ENCODE measurements at regions of chr3 and their contacts with region 1.

Region 1: GRCh38 chr3:179147873-179148615 is at the start of gene PIK3CA:
- DNase-seq: peak; percentile 85 to 99 (median 90)
- ATAC-seq: peak; percentile 74
- H3K4me3 ChIP-seq: peak within 1 kb of the TSS; percentile 73
- H3K4me3 Mint-ChIP-seq: peak within 1 kb of the TSS; percentile 95
- H3K27ac ChIP-seq: peak within 1 kb of the TSS; percentile 90 to 100
- H3K27ac Mint-ChIP-seq: peak within 1 kb of the TSS; percentile 91
- H3K4me1 ChIP-seq: peaks cover 2% of the 10 kb centered on the region
- H3K4me1 Mint-ChIP-seq: peaks cover 40% of the 10 kb centered on the region
- H3K27me3 ChIP-seq: no peaks in the 10 kb centered on the region
- H3K27me3 Mint-ChIP-seq: no peaks in the 10 kb centered on the region
- CTCF ChIP-seq: no peak
- total RNA-seq, gene PIK3CA: 57.1 to 63.1 TPM

Region 2: DNA sequence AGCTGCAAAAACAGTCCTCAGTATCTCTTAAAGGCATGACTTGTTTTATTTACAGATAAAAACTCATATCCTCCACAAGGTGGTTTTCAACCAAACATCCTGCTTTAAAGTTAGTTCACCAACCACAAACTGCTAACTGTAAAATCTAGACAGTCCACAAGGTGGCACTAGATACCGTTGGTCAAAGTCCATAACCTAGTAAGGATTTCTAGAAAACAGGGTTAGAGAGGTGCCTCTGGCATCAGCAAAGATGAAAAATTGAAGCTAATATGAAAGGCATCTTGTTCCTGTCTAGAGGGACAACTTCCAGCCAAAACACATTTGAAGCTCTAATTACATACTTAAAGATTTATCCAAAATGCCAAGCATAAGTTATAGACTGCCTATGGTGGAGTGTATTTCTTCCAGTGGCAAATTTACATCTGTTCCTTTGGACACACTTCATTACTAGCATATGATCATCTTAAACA is 132.5 kb before region 1 on chr3:
- CTCF ChIA-PET with region 1: interaction called, 6 read pairs
- POLR2A ChIA-PET with region 1: interaction called, 22 read pairs
- intact Hi-C with region 1: loop called (anchors 1 to 2 kb)
- DNase-seq: peak in 12 of 14 experiments; percentile 6 to 90 (median 58)
- ATAC-seq: peak; percentile 98
- H3K4me3 ChIP-seq: no peak overlapping the region
- H3K4me3 Mint-ChIP-seq: no peak overlapping the region
- H3K27ac ChIP-seq: no peak overlapping the region
- H3K27ac Mint-ChIP-seq: peak overlapping the region; percentile 31
- H3K4me1 ChIP-seq: peaks cover 4% of the 10 kb centered on the region
- H3K4me1 Mint-ChIP-seq: peaks cover 45% of the 10 kb centered on the region
- H3K27me3 ChIP-seq: no peaks in the 10 kb centered on the region
- H3K27me3 Mint-ChIP-seq: no peaks in the 10 kb centered on the region
- CTCF ChIP-seq: peak; percentile 88

Region 3: GRCh38 chr3:179071550-179072397 is 76.3 kb before region 1 on chr3 and contains the start of gene ZMAT3:
- CTCF ChIA-PET with region 1: no interaction called
- POLR2A ChIA-PET with region 1: interaction called, 27 read pairs
- intact Hi-C with region 1: loop called (anchors 2 kb)
- DNase-seq: peak; percentile 72 to 94 (median 81)
- ATAC-seq: peak; percentile 81
- H3K4me3 ChIP-seq: peak within 1 kb of the TSS; percentile 78
- H3K4me3 Mint-ChIP-seq: peak within 1 kb of the TSS; percentile 99
- H3K27ac ChIP-seq: peak within 1 kb of the TSS; percentile 76 to 92
- H3K27ac Mint-ChIP-seq: peak within 1 kb of the TSS; percentile 86
- H3K4me1 ChIP-seq: peaks cover 30% of the 10 kb centered on the region
- H3K4me1 Mint-ChIP-seq: peaks cover 69% of the 10 kb centered on the region
- H3K27me3 ChIP-seq: no peaks in the 10 kb centered on the region
- H3K27me3 Mint-ChIP-seq: no peaks in the 10 kb centered on the region
- CTCF ChIP-seq: no peak
- total RNA-seq, gene ZMAT3: 10.2 to 13.0 TPM

Region 4: DNA sequence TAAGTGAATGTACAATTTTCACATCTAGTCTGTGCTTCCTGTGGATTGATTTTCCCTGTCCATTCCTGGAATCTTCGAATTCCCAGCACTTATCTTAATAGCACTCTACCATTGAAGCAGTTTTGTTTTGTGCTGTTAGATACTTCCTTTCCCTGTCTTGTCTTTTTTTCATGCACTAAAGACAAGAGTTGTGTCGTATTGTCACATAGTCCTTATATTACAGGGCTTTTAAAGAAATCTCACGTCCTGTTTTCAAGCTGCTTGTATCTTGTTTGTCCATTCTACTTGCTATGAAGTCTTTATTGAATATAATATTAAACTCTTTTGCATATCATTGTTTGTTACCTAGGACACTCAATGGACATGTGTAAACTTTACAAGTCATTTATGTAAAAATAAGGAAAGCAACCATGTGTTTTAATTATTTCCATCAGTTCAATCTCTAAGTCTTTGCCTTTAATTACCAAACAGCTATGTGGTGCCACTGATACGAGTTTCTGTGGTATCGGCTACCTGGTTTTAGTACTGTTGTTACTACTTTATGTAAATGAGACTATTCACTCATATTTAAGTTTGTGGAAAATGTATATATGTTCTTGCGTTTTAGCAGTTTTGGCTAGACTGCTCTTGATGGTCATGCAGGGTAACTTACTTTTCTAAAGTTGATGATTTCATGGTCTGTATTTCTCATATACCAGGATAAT is 10.4 kb after region 1 on chr3:
- CTCF ChIA-PET with region 1: no interaction called
- POLR2A ChIA-PET with region 1: interaction called, 10 read pairs
- intact Hi-C with region 1: no loop called
- DNase-seq: no peak
- ATAC-seq: no peak
- H3K4me3 ChIP-seq: no peak overlapping the region
- H3K4me3 Mint-ChIP-seq: no peak overlapping the region
- H3K27ac ChIP-seq: no peak overlapping the region
- H3K27ac Mint-ChIP-seq: no peak overlapping the region
- H3K4me1 ChIP-seq: peaks cover 13% of the 10 kb centered on the region
- H3K4me1 Mint-ChIP-seq: peaks cover 78% of the 10 kb centered on the region
- H3K27me3 ChIP-seq: no peaks in the 10 kb centered on the region
- H3K27me3 Mint-ChIP-seq: no peaks in the 10 kb centered on the region
- CTCF ChIP-seq: no peak

Region 5: GRCh38 chr3:179260949-179261765 is 113.1 kb after region 1 on chr3:
- CTCF ChIA-PET with region 1: no interaction called
- POLR2A ChIA-PET with region 1: interaction called, 14 read pairs
- intact Hi-C with region 1: no loop called
- DNase-seq: peak; percentile 31 to 85 (median 64)
- ATAC-seq: peak; percentile 96
- H3K4me3 ChIP-seq: peak overlapping the region; percentile 61
- H3K4me3 Mint-ChIP-seq: peak overlapping the region; percentile 87
- H3K27ac ChIP-seq: no peak overlapping the region
- H3K27ac Mint-ChIP-seq: no peak overlapping the region
- H3K4me1 ChIP-seq: peaks cover 12% of the 10 kb centered on the region
- H3K4me1 Mint-ChIP-seq: peaks cover 12% of the 10 kb centered on the region
- H3K27me3 ChIP-seq: peaks cover 0 to 2% of the 10 kb centered on the region in 2 experiments
- H3K27me3 Mint-ChIP-seq: no peaks in the 10 kb centered on the region
- CTCF ChIP-seq: no peak

Region 6: DNA sequence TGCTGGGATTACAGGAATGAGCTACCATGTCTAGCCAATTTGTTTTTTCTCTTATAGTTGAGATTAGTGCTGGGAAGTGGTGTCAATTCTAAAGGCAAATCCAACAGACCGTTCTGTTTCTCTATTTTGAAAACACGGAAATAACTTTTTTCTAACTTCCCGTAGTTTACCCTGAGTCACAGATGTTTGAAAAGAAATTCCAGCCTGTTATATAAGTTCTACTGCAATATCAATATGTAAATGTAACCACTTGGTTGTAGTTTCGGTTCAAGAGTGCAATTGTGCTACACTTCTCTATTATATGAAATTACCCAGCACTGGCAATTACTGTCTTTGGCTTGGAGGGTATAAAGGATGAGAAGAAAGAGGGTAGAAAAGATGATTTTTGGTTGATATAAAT is 325.5 kb after region 1 on chr3:
- CTCF ChIA-PET with region 1: no interaction called
- POLR2A ChIA-PET with region 1: no interaction called
- intact Hi-C with region 1: no loop called
- DNase-seq: peak in 3 of 14 experiments; percentile 9 to 35 (median 26)
- ATAC-seq: no peak
- H3K4me3 ChIP-seq: no peak overlapping the region
- H3K4me3 Mint-ChIP-seq: no peak overlapping the region
- H3K27ac ChIP-seq: no peak overlapping the region
- H3K27ac Mint-ChIP-seq: no peak overlapping the region
- H3K4me1 ChIP-seq: no peaks in the 10 kb centered on the region
- H3K4me1 Mint-ChIP-seq: peaks cover 5% of the 10 kb centered on the region
- H3K27me3 ChIP-seq: no peaks in the 10 kb centered on the region
- H3K27me3 Mint-ChIP-seq: no peaks in the 10 kb centered on the region
- CTCF ChIP-seq: no peak

Region 7: GRCh38 chr3:179562591-179563270 is 414.7 kb after region 1 on chr3 and contains the start of gene ACTL6A:
- CTCF ChIA-PET with region 1: no interaction called
- POLR2A ChIA-PET with region 1: interaction called, 13 read pairs
- intact Hi-C with region 1: loop called in 1 of 2 experiments (anchors 5 kb)
- DNase-seq: peak; percentile 94 to 99 (median 98)
- ATAC-seq: peak; percentile 90
- H3K4me3 ChIP-seq: peak within 1 kb of the TSS; percentile 83
- H3K4me3 Mint-ChIP-seq: peak within 1 kb of the TSS; percentile 91
- H3K27ac ChIP-seq: peak within 1 kb of the TSS; percentile 38 to 57
- H3K27ac Mint-ChIP-seq: peak within 1 kb of the TSS; percentile 85
- H3K4me1 ChIP-seq: peaks cover 31% of the 10 kb centered on the region
- H3K4me1 Mint-ChIP-seq: peaks cover 30% of the 10 kb centered on the region
- H3K27me3 ChIP-seq: no peaks in the 10 kb centered on the region
- H3K27me3 Mint-ChIP-seq: peaks cover 5% of the 10 kb centered on the region
- CTCF ChIP-seq: no peak
- total RNA-seq, gene ACTL6A: 19.0 to 19.3 TPM

Region 8: DNA sequence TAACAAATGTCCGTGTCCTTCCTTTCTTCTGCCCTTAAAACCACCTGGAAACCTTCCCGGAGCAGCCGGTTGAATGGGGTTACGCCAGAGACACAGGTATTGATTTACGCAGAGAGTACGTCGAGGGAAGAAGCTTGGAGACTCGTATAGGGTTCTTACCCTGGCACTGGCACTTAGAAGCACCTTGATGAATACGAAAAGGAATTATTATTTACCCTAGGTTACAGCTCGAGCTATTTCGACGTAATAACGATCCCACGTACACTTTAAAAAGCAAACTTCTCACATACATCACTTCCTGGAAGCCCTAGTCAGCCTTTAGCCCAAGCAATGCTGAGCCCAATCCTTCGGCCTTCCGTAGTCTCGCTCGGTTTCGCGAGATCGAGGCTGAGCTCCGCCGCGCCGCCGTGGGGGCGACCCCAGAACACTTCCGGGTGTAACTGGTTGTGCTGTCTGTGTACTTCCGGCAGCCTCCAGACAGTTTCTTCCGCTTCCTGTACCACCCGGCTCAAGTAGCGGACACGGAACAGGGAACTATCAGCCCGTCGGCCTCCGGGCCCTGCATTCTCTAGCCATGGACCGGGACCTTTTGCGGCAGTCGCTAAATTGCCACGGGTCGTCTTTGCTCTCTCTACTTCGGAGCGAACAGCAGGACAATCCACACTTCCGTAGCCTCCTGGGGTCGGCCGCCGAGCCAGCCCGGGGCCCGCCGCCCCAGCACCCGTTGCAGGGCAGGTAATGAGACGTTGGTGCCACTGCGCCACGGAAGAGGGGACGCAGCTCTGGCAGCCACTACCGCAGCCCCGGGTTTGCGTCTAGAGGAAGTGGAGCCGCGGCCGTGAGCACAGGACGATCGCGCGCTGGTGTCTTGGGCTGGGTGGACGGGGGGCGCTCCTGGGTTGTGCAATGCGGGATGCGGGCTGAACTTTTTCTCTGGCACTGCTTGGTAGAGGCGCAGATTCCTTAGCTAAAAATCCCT is 1453.9 kb after region 1 on chr3 and contains the start of gene TTC14:
- CTCF ChIA-PET with region 1: no interaction called
- POLR2A ChIA-PET with region 1: interaction called, 11 read pairs
- intact Hi-C with region 1: loop called in 1 of 2 experiments (anchors 5 kb)
- DNase-seq: peak; percentile 85 to 97 (median 90)
- ATAC-seq: peak; percentile 87
- H3K4me3 ChIP-seq: peak within 1 kb of the TSS; percentile 83
- H3K4me3 Mint-ChIP-seq: peak within 1 kb of the TSS; percentile 96
- H3K27ac ChIP-seq: peak within 1 kb of the TSS; percentile 93
- H3K27ac Mint-ChIP-seq: peak within 1 kb of the TSS; percentile 95
- H3K4me1 ChIP-seq: peaks cover 12% of the 10 kb centered on the region
- H3K4me1 Mint-ChIP-seq: peaks cover 47% of the 10 kb centered on the region
- H3K27me3 ChIP-seq: no peaks in the 10 kb centered on the region
- H3K27me3 Mint-ChIP-seq: peaks cover 25% of the 10 kb centered on the region
- CTCF ChIP-seq: no peak
- total RNA-seq, gene TTC14: 79.0 to 84.4 TPM

Measured in CD4-positive, alpha-beta T cell (primary cell).